CD4-positive, alpha-beta memory T cell (primary cell): ENCODE measurements at regions of chr14 and their contacts with region 1.

Region 1: GRCh38 chr14:101823511-101824120 is 62.1 kb downstream of the PPP2R5C start:
- DNase-seq: peak; percentile 83 to 95 (median 88)
- H3K4me3 ChIP-seq: peak overlapping the region; percentile 78 to 85
- H3K4me3 Mint-ChIP-seq: peak overlapping the region; percentile 90 to 99 (median 95)
- H3K27ac ChIP-seq: peak overlapping the region; percentile 98
- H3K27ac Mint-ChIP-seq: peak overlapping the region; percentile 97 to 100 (median 100)
- H3K4me1 ChIP-seq: peaks cover 84% of the 10 kb centered on the region
- H3K4me1 Mint-ChIP-seq: peaks cover 59 to 88% (median 69%) of the 10 kb centered on the region in 4 donors
- H3K27me3 ChIP-seq: no peaks in the 10 kb centered on the region
- H3K27me3 Mint-ChIP-seq: no peaks in the 10 kb centered on the region

Region 2: DNA sequence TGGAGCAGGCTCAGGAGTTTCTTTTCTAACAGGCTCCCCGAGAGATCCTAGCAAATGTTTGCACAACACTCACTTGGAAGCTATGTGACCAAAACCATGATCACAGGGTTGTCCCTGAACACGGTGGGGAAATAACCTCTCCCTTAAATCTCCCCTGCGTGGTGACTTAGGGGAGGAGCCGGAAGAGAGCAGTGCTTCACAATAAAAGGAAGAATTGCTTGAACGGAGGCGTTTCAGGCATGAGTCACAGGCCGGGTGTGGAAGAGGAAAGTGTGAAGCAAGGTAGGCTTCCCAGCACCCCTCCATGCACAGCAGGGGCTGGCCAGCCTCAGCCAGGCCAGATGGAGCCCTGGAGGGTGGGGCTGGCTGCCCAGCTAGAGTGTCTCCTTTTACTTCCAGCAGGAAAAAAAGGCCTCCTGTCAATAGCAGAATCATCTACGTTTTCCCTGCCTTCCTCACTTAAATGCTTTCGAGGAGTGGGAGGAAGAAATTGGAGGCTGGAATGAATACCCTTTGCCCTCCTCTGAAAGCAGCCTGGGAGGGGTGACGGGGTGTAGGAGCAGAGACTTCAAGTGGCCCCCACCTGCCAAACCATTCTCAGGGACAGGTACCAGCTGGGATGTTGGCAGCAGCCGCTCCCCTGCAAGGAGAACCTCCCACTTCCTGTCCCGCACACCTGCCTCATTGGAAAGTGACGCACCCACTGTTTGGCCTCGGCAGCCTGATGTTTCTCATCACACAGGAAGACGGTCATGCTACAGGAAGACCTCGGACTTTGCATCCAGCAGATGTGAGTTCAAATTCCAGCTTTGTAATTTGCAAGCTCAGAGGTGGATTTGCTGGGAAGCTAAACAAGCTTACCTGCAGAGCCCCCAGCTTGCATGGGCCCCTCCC is 92.2 kb before region 1 on chr14:
- CTCF ChIA-PET with region 1: no interaction called
- POLR2A ChIA-PET with region 1: interaction called, 17 read pairs
- intact Hi-C with region 1: no loop called
- DNase-seq: peak; percentile 83 to 96 (median 83)
- H3K4me3 ChIP-seq: peak overlapping the region; percentile 31 to 58
- H3K4me3 Mint-ChIP-seq: peak overlapping the region; percentile 68 to 86 (median 82)
- H3K27ac ChIP-seq: peak overlapping the region; percentile 75
- H3K27ac Mint-ChIP-seq: peak overlapping the region; percentile 85 to 100 (median 99)
- H3K4me1 ChIP-seq: peaks cover 35% of the 10 kb centered on the region
- H3K4me1 Mint-ChIP-seq: peaks cover 29 to 52% (median 42%) of the 10 kb centered on the region in 4 donors
- H3K27me3 ChIP-seq: no peaks in the 10 kb centered on the region
- H3K27me3 Mint-ChIP-seq: no peaks in the 10 kb centered on the region

Region 3: DNA sequence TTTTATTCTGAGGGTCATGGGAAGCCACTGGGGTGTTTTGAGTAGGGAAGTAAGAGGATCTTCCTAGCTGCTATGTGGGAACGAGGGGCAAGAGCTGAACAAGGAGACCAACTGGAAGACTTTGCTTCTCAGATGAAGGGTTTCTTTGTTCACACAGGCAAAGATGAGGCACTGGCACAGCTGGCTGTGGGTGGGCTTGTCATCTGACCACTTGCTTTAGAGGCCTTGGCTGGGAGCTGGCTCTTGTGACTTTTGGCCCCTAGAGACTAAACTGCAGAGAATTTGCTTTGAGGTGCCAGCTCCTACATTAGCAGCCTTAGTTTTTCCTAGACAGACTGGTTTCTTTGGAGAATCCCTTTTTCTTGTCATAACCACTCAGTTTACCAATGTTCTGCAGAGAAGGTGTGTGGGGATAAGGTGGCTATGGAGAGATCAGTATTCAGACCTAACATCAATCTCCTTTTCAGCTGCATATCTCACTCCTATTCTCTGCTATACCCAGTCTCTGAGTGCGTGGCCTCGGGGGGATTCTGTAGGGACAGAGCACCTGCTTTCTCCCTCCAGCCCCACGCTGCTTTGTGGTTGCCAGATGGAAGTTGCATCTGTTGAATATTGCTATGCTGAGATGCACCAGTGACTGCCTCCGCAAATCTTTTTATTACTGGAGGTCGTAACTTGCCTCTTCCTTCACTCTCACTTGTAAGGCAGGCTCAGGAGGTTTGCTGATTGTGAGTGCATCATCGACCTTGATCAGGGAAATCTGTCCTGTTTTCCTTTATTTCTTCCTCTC is 49.4 kb before region 1 on chr14:
- CTCF ChIA-PET with region 1: interaction called, 74 read pairs
- POLR2A ChIA-PET with region 1: interaction called, 98 read pairs
- intact Hi-C with region 1: loop called (anchors 1 kb)
- DNase-seq: no peak
- H3K4me3 ChIP-seq: no peak overlapping the region
- H3K4me3 Mint-ChIP-seq: no peak overlapping the region
- H3K27ac ChIP-seq: no peak overlapping the region
- H3K27ac Mint-ChIP-seq: peak overlapping the region in 3 of 7 donors; percentile 5 to 69 (median 42)
- H3K4me1 ChIP-seq: peaks cover 13% of the 10 kb centered on the region
- H3K4me1 Mint-ChIP-seq: peaks cover 14 to 42% (median 27%) of the 10 kb centered on the region in 4 donors
- H3K27me3 ChIP-seq: no peaks in the 10 kb centered on the region
- H3K27me3 Mint-ChIP-seq: no peaks in the 10 kb centered on the region

Region 4: DNA sequence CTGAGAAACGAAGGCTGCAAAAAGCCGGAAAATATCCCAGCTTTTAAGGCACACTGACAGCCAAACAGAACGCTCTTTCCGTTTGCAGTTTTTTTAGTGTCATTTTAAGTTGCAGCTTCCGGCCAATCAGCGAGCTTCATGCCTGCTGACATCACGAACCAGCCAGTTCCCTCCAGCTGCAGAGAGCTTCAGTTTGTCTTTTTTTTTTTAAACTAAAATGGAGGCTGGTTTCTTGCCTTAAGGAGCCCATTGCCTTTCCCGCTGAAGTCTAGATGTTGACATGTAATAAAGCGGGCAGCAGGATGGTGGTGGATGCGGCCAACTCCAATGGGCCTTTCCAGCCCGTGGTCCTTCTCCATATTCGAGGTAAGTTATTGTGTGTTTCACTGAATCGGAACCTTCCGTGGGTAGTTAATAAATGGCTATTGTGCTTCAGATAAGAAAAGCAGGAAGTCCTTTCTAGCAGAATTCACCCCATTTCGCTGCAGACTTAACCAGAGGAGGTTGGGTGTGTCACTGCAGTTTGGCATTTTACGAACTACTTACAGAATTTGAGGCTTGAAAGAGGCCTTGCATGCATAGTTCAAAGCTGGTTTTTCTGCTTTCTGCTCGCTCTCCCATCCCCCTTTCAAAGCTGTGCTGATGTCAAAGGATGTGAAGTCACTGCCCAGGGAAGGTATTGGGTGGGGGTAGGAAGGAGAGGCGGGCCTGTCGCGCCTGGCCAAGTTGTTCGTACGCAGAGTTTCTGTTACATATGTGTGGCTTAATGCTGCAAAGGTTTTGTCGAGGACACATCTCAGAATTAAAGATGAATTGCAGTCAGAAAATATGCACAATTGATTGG is 13.7 kb before region 1 on chr14:
- CTCF ChIA-PET with region 1: interaction called, 67 read pairs
- POLR2A ChIA-PET with region 1: interaction called, 1,038 read pairs
- intact Hi-C with region 1: loop called (anchors 1 kb)
- DNase-seq: peak; percentile 91 to 97 (median 95)
- H3K4me3 ChIP-seq: peak overlapping the region; percentile 85 to 97
- H3K4me3 Mint-ChIP-seq: peak overlapping the region; percentile 90 to 97 (median 95)
- H3K27ac ChIP-seq: peak overlapping the region; percentile 98
- H3K27ac Mint-ChIP-seq: peak overlapping the region; percentile 97 to 100 (median 99)
- H3K4me1 ChIP-seq: peaks cover 46% of the 10 kb centered on the region
- H3K4me1 Mint-ChIP-seq: peaks cover 31 to 62% (median 46%) of the 10 kb centered on the region in 4 donors
- H3K27me3 ChIP-seq: no peaks in the 10 kb centered on the region
- H3K27me3 Mint-ChIP-seq: no peaks in the 10 kb centered on the region

Region 5: GRCh38 chr14:101876555-101876938 is 52.9 kb after region 1 on chr14:
- CTCF ChIA-PET with region 1: no interaction called
- POLR2A ChIA-PET with region 1: interaction called, 7 read pairs
- intact Hi-C with region 1: loop called (anchors 1 kb)
- DNase-seq: peak; percentile 71 to 94 (median 82)
- H3K4me3 ChIP-seq: peak overlapping the region in 1 of 2 donors; percentile 8
- H3K4me3 Mint-ChIP-seq: peak overlapping the region; percentile 59 to 86 (median 76)
- H3K27ac ChIP-seq: peak overlapping the region; percentile 65
- H3K27ac Mint-ChIP-seq: peak overlapping the region; percentile 73 to 97 (median 91)
- H3K4me1 ChIP-seq: peaks cover 88% of the 10 kb centered on the region
- H3K4me1 Mint-ChIP-seq: peaks cover 55 to 88% (median 74%) of the 10 kb centered on the region in 4 donors
- H3K27me3 ChIP-seq: no peaks in the 10 kb centered on the region
- H3K27me3 Mint-ChIP-seq: no peaks in the 10 kb centered on the region

Region 6: GRCh38 chr14:102893452-102893851 is 1069.8 kb after region 1 on chr14:
- CTCF ChIA-PET with region 1: no interaction called
- POLR2A ChIA-PET with region 1: no interaction called
- intact Hi-C with region 1: no loop called
- DNase-seq: no peak
- H3K4me3 ChIP-seq: no peak overlapping the region
- H3K4me3 Mint-ChIP-seq: no peak overlapping the region
- H3K27ac ChIP-seq: no peak overlapping the region
- H3K27ac Mint-ChIP-seq: no peak overlapping the region
- H3K4me1 ChIP-seq: no peaks in the 10 kb centered on the region
- H3K4me1 Mint-ChIP-seq: peaks cover 0 to 1% (median under 1%) of the 10 kb centered on the region in 4 donors
- H3K27me3 ChIP-seq: no peaks in the 10 kb centered on the region
- H3K27me3 Mint-ChIP-seq: no peaks in the 10 kb centered on the region